ENCODE measurements at regions of chr20 and their contacts with region 1.

Region 1: GRCh38 chr20:50379049-50379990 is 130.9 kb upstream of the PTPN1 start:
- DNase-seq: peak; percentile 94
- ATAC-seq: peak; percentile 90
- H3K4me3 ChIP-seq: no peak overlapping the region
- H3K27ac ChIP-seq: peak overlapping the region in 1 of 2 donors; percentile 58
- H3K4me1 ChIP-seq: no peaks in the 10 kb centered on the region
- H3K27me3 ChIP-seq: no peaks in the 10 kb centered on the region

Region 2: GRCh38 chr20:50320910-50321796 is 58.2 kb before region 1 on chr20:
- intact Hi-C with region 1: loop called (anchors 5 kb)
- DNase-seq: peak; percentile 96 to 97
- ATAC-seq: peak; percentile 96
- H3K4me3 ChIP-seq: no peak overlapping the region
- H3K27ac ChIP-seq: peak overlapping the region; percentile 15 to 65
- H3K4me1 ChIP-seq: no peaks in the 10 kb centered on the region
- H3K27me3 ChIP-seq: no peaks in the 10 kb centered on the region

Region 3: GRCh38 chr20:50460460-50461267 is 81.3 kb after region 1 on chr20:
- intact Hi-C with region 1: loop called in 1 of 2 experiments (anchors 5 kb)
- DNase-seq: peak; percentile 92 to 97
- ATAC-seq: peak; percentile 95
- H3K4me3 ChIP-seq: no peak overlapping the region
- H3K27ac ChIP-seq: no peak overlapping the region
- H3K4me1 ChIP-seq: no peaks in the 10 kb centered on the region
- H3K27me3 ChIP-seq: no peaks in the 10 kb centered on the region

Region 4: GRCh38 chr20:50635667-50636503 is 256.6 kb after region 1 on chr20:
- intact Hi-C with region 1: no loop called
- DNase-seq: peak; percentile 61 to 87
- ATAC-seq: peak; percentile 60
- H3K4me3 ChIP-seq: no peak overlapping the region
- H3K27ac ChIP-seq: no peak overlapping the region
- H3K4me1 ChIP-seq: no peaks in the 10 kb centered on the region
- H3K27me3 ChIP-seq: no peaks in the 10 kb centered on the region

Measured in aorta (tissue), 5 donors.